Activated T-helper 2 cell treated with anti-CD3 and anti-CD28 coated beads, Interferon-gamma antibody, Interleukin-2, Interleukin-4, amounts not matched to agents 10 μg/mL and 5 μg/mL and 100 μg/mL, durations not matched to agents 14 hours and 24 hours and 36 hours (primary cell): ENCODE measurements at regions of chr18 and their contacts with region 1.

Region 1: DNA sequence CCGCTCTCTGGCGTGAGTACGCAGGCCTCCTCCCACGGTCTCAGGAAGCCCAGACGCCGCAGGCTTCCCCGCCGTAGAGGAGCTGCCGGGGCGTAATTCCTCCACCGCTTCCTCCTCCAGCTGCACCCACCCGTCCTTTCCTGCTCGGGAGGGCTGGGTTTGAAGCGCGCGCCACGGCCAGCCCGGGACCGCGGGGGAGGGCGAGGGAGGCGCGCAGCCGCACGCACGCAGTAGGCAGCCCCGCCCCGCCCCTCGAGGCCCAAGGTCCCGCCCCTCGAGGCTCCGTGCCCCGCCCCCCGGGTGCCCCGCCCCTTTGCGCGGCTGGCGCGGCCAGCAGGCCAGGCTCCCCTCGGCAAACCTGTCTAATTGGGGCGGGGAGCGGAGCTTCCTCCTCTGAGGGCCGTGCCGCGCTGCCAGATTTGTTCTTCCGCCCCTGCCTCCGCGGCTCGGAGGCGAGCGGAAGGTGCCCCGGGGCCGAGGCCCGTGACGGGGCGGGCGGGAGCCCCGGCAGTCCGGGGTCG is at the start of gene MALT1:
- DNase-seq: peak; percentile 93
- H3K4me3 Mint-ChIP-seq: peak within 1 kb of the TSS; percentile 93
- H3K27ac Mint-ChIP-seq: peak within 1 kb of the TSS; percentile 88
- H3K4me1 Mint-ChIP-seq: peaks cover 59% of the 10 kb centered on the region
- H3K27me3 Mint-ChIP-seq: peaks cover 3% of the 10 kb centered on the region
- total RNA-seq, gene MALT1: 23.5 and 23.9 TPM in 2 replicates

Region 2: GRCh38 chr18:58615140-58616132 is 55.7 kb before region 1 on chr18:
- intact Hi-C with region 1: loop called (anchors 1 kb)
- DNase-seq: peak; percentile 64
- H3K4me3 Mint-ChIP-seq: peak overlapping the region; percentile 26
- H3K27ac Mint-ChIP-seq: peak overlapping the region; percentile 85
- H3K4me1 Mint-ChIP-seq: peaks cover 34% of the 10 kb centered on the region
- H3K27me3 Mint-ChIP-seq: peaks cover 27% of the 10 kb centered on the region

Region 3: DNA sequence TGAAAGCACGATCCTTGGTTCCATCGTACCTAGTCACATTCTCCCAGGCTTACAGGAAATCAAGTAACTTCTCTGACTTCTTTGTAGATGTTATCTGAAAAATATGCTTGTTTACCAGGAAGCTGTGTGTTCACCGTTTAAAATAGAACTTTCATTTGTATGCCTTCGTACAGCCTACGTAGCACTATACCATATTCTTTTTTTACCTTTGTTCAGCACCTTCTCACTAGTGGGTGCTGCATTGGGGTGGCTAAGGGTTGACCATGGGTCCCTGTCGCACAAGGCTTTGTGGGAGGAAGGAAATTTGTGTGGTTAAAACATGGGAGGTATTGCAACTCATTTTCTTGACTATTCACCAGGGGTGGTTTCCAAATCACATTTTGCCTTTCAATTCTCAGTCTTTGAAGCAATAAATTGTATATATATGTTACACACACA is 16.7 kb after region 1 on chr18:
- intact Hi-C with region 1: loop called (anchors 1 kb)
- DNase-seq: peak; percentile 67
- H3K4me3 Mint-ChIP-seq: peak overlapping the region; percentile 50
- H3K27ac Mint-ChIP-seq: peak overlapping the region; percentile 86
- H3K4me1 Mint-ChIP-seq: peaks cover 34% of the 10 kb centered on the region
- H3K27me3 Mint-ChIP-seq: no peaks in the 10 kb centered on the region

Region 4: DNA sequence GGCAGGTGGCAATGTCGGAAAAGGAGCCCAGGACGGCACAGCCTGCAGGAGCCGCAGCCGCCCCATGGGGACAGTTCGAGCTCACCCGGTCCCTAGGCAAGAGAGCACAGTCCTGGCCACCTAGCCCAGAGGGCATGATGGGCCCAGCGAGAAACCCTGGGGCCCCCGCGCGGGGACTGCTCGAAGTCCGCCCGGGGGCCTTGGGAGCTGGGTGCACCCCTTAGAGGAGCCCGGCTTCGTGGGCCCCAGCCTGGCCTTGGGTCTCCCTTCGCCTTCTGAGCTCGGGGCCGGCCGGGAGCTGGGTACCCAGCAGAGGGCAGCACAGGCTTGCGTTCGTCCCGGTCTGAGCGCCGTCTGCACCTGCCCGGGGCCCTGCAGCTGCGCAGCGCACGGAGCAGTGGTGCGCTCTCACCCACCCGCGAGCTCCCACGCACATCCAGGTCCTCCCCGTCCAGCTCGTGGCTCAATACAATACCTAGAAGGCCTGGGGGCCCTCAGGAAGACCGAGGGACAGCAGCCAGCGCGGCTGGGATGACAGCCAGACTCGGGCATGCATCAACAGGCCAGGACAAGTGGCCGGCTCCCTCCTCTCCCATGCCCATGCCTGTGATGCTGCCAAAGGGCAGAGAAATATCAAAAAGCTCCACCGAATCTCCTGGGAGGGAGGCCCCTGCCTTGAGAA is 97.3 kb after region 1 on chr18:
- intact Hi-C with region 1: loop called (anchors 1 kb)
- DNase-seq: peak; percentile 55
- H3K4me3 Mint-ChIP-seq: no peak overlapping the region
- H3K27ac Mint-ChIP-seq: no peak overlapping the region
- H3K4me1 Mint-ChIP-seq: peaks cover 15% of the 10 kb centered on the region
- H3K27me3 Mint-ChIP-seq: peaks cover 38% of the 10 kb centered on the region